ENCODE measurements at regions of chr6 and their contacts with region 1.

Region 1: DNA sequence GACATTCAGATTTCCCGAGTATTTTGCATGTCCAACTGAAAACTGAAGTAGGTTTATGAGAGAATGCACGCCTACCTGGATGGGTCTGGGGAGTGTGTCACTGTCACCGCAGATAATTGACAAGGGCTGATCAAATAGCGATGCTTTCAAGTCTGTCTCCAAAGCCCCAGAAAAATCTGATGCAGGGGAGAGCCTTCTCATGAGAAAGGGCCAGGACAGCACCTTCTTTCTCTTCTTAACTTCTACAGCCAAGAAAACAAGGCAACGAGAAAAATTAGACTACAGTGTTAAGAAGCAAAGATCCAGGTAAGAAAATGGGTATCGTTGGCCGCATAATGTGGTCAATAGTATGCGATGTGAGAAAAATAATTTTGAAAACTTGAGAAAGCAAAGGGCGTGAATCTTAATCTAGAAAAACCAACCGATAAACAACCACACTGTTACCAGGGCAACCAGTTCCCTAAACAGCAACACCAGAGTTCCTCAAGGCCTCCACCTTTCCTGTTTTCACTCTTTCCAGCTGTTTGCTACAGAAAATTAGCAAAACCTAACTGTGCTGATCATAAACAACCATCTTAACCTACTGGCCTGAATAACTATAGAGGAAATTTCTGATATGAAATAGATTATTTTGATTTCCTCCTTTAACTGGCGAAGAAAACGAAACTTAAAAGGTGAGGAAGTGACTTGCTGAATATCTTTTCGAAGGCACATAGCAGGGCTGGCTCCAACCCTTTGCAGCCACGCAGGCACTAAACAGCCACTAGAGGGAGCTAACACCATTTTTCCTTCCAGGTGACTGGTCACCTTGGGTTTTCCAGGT is 2.6 kb downstream of the TAGAP start:
- DNase-seq: peak; percentile 90 to 96 (median 93)
- H3K4me3 ChIP-seq: peak overlapping the region; percentile 77 to 79
- H3K4me3 Mint-ChIP-seq: peak overlapping the region; percentile 99 to 100 (median 100)
- H3K27ac ChIP-seq: peak overlapping the region; percentile 82
- H3K27ac Mint-ChIP-seq: peak overlapping the region; percentile 98 to 100 (median 99)
- H3K4me1 ChIP-seq: peaks cover 66% of the 10 kb centered on the region
- H3K4me1 Mint-ChIP-seq: peaks cover 45 to 88% (median 59%) of the 10 kb centered on the region in 4 donors
- H3K27me3 ChIP-seq: no peaks in the 10 kb centered on the region
- H3K27me3 Mint-ChIP-seq: peaks cover 0 to 2% of the 10 kb centered on the region in 2 donors

Region 2: DNA sequence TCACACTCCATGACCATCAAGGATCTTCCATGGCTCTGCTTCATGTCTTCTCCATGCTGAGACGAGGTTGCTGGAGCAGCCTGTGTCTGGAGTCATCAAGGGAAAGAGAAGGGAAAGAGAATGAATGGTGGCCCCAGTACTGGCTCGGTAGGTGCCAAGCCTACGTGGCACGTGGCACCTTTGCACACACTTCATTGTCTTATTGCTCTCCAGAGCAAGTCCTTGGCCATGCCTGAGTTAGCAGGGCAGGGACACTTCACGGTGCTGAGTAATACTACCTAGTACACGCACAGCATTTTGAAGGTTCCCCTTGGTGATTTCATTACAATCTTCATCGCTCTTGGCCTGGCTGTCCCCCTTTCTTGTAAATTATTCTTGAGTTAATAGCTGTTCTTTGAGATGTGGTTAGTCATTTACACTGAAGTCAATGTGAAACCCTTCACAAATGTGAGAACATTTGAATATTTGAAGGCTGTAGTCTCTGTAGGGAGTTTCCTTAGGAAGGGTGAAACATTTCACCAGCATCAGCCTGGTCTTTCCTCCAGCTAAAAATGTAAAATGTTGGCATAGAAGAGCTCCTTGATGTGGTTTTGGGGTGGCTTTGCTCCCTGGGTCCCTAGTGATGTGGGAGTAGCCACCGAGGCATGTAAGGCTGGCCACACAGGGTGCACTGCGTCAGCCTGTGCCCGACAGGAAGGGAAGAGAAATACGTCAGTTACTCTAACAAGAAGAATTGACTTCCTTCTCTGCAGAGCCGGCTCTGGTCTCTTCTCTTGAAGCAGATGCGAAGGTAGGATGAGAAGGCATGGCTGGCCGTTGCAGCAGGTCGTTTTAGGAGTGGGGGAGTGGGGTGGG is 392.7 kb before region 1 on chr6 and contains the start of gene SYTL3:
- CTCF ChIA-PET with region 1: no interaction called
- POLR2A ChIA-PET with region 1: interaction called, 4 read pairs
- intact Hi-C with region 1: loop called (anchors 2 kb)
- DNase-seq: peak; percentile 92 to 94 (median 92)
- H3K4me3 ChIP-seq: peak within 1 kb of the TSS in 1 of 2 donors; percentile 26
- H3K4me3 Mint-ChIP-seq: peak within 1 kb of the TSS; percentile 69 to 89 (median 84)
- H3K27ac ChIP-seq: peak within 1 kb of the TSS; percentile 66
- H3K27ac Mint-ChIP-seq: peak within 1 kb of the TSS; percentile 82 to 98 (median 94)
- H3K4me1 ChIP-seq: peaks cover 57% of the 10 kb centered on the region
- H3K4me1 Mint-ChIP-seq: peaks cover 49 to 77% (median 58%) of the 10 kb centered on the region in 4 donors
- H3K27me3 ChIP-seq: no peaks in the 10 kb centered on the region
- H3K27me3 Mint-ChIP-seq: no peaks in the 10 kb centered on the region
- total RNA-seq, gene SYTL3: 22.2 to 24.3 TPM

Region 3: GRCh38 chr6:158861686-158862381 is 180.4 kb before region 1 on chr6:
- CTCF ChIA-PET with region 1: no interaction called
- POLR2A ChIA-PET with region 1: no interaction called
- intact Hi-C with region 1: no loop called
- DNase-seq: no peak
- H3K4me3 ChIP-seq: no peak overlapping the region
- H3K4me3 Mint-ChIP-seq: no peak overlapping the region
- H3K27ac ChIP-seq: no peak overlapping the region
- H3K27ac Mint-ChIP-seq: no peak overlapping the region
- H3K4me1 ChIP-seq: no peaks in the 10 kb centered on the region
- H3K4me1 Mint-ChIP-seq: peaks cover 0 to 8% (median 2%) of the 10 kb centered on the region in 4 donors
- H3K27me3 ChIP-seq: no peaks in the 10 kb centered on the region
- H3K27me3 Mint-ChIP-seq: no peaks in the 10 kb centered on the region

Region 4: DNA sequence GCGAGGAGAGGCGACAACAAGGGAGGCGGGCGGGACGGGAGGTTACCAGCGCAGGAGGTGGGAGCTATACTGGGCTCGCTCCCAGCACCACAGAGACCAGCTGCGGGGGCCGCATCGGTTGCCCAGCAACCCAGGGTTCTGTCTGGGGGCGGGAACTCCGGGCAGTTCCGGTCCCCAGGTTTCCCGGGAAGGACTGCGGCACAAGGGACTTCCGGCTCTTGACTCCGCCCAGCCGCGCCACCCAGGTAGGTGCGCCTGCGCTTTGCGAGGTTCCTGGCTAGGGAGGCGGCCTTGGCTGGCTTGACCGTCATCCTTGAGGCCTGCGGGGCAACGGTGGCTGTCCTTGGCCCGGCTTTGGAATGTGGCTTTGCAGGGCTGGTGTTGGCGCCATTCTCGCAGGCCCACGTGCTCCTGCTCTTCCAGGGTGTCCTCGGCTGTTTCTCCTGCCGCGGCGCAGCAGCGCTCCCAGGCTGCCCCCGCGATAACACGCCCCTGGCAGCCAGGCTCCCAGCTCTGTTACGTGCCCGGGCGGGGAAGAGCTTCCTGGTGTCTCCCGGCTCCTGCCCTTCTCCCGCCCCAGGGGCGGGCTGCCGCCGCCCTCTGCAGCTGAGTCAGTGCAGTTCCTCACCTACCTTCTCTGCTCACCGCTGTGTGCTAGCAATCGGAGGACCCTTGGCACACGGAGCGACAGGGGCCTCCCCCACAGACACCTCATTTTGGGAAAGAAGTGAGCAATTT is 42.4 kb before region 1 on chr6 and contains the start of gene RSPH3:
- CTCF ChIA-PET with region 1: interaction called, 11 read pairs
- POLR2A ChIA-PET with region 1: interaction called, 34 read pairs
- intact Hi-C with region 1: loop called (anchors 2 kb)
- DNase-seq: peak; percentile 81 to 87 (median 83)
- H3K4me3 ChIP-seq: peak within 1 kb of the TSS; percentile 84
- H3K4me3 Mint-ChIP-seq: peak within 1 kb of the TSS; percentile 96 to 99 (median 98)
- H3K27ac ChIP-seq: peak within 1 kb of the TSS; percentile 73
- H3K27ac Mint-ChIP-seq: peak within 1 kb of the TSS; percentile 92 to 97 (median 95)
- H3K4me1 ChIP-seq: peaks cover 18% of the 10 kb centered on the region
- H3K4me1 Mint-ChIP-seq: peaks cover 10 to 33% (median 18%) of the 10 kb centered on the region in 4 donors
- H3K27me3 ChIP-seq: no peaks in the 10 kb centered on the region
- H3K27me3 Mint-ChIP-seq: no peaks in the 10 kb centered on the region
- total RNA-seq, gene RSPH3: 3.4 to 3.5 TPM

Region 5: DNA sequence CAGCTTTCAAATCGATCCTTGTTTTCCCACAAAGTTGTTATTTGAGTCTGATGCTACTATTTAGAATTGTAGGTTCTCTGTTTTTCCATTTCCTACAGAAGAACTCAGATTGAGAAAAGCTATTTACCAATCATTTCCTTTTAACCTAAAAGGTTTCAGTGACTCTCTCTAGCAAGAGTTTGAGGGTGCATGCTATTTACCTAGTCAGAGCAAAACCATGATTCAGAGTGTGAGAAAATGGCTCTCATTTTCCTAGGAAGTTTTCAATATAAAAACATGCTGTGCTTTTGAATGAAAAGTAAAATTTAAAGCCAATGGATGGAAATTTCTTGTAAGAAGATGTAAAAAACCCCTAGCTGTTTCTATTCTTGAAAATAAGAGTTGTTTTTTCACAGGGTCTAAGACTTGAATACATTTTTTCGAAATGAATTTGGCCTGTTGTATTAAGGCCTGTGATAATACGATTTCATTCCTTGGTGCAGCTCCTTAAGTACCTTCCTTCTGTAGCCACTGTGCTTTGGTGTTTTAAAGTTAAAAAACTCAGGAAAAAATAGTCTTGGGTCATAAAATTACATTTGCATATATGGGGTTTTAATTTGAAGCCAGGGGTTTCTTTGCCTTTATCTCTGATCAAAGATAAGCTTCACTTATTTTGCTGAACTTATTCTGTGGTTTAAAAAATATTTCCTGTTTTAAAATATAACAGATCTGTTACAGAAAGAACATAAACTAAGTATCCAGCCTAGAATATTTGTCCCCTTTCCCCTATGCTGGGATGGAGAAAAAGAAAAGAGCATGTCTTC is 24.3 kb before region 1 on chr6:
- CTCF ChIA-PET with region 1: interaction called, 220 read pairs
- POLR2A ChIA-PET with region 1: interaction called, 651 read pairs
- intact Hi-C with region 1: loop called (anchors 1 kb)
- DNase-seq: no peak
- H3K4me3 ChIP-seq: no peak overlapping the region
- H3K4me3 Mint-ChIP-seq: peak overlapping the region in 6 of 8 donors; percentile 25 to 76 (median 50)
- H3K27ac ChIP-seq: peak overlapping the region; percentile 48
- H3K27ac Mint-ChIP-seq: peak overlapping the region; percentile 52 to 90 (median 77)
- H3K4me1 ChIP-seq: peaks cover 64% of the 10 kb centered on the region
- H3K4me1 Mint-ChIP-seq: peaks cover 39 to 62% (median 51%) of the 10 kb centered on the region in 4 donors
- H3K27me3 ChIP-seq: no peaks in the 10 kb centered on the region
- H3K27me3 Mint-ChIP-seq: no peaks in the 10 kb centered on the region

Region 6: DNA sequence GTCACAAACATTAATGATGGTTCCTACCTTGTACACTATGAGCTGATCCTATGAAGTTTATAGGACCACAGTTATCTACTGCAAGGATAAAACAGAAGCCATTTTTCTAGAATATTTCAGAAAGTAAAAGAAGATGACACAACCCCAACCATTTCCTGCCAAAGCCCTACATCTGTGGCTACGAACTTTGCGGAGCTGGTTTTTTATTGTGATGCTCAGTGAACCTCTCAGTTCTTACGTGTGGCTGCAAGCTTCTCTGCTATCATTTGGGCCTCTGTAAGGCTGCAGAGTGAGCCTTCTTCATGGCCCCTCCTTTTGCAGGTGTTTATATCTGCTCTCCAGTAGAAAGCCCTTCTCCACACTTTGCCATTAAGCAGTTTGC is 20.3 kb after region 1 on chr6:
- CTCF ChIA-PET with region 1: interaction called, 74 read pairs
- POLR2A ChIA-PET with region 1: interaction called, 564 read pairs
- intact Hi-C with region 1: loop called (anchors 1 kb)
- DNase-seq: peak; percentile 80 to 87 (median 83)
- H3K4me3 ChIP-seq: no peak overlapping the region
- H3K4me3 Mint-ChIP-seq: peak overlapping the region; percentile 44 to 80 (median 72)
- H3K27ac ChIP-seq: peak overlapping the region; percentile 57
- H3K27ac Mint-ChIP-seq: peak overlapping the region; percentile 88 to 99 (median 98)
- H3K4me1 ChIP-seq: peaks cover 87% of the 10 kb centered on the region
- H3K4me1 Mint-ChIP-seq: peaks cover 66 to 91% (median 79%) of the 10 kb centered on the region in 4 donors
- H3K27me3 ChIP-seq: no peaks in the 10 kb centered on the region
- H3K27me3 Mint-ChIP-seq: no peaks in the 10 kb centered on the region

Region 7: GRCh38 chr6:159098636-159099106 is 56.5 kb after region 1 on chr6:
- CTCF ChIA-PET with region 1: interaction called, 333 read pairs
- POLR2A ChIA-PET with region 1: interaction called, 646 read pairs
- intact Hi-C with region 1: loop called (anchors 1 kb)
- DNase-seq: peak; percentile 82 to 91 (median 88)
- H3K4me3 ChIP-seq: peak overlapping the region in 1 of 2 donors; percentile 29
- H3K4me3 Mint-ChIP-seq: peak overlapping the region; percentile 71 to 89 (median 81)
- H3K27ac ChIP-seq: peak overlapping the region; percentile 76
- H3K27ac Mint-ChIP-seq: peak overlapping the region; percentile 93 to 99 (median 98)
- H3K4me1 ChIP-seq: peaks cover 64% of the 10 kb centered on the region
- H3K4me1 Mint-ChIP-seq: peaks cover 43 to 82% (median 60%) of the 10 kb centered on the region in 4 donors
- H3K27me3 ChIP-seq: no peaks in the 10 kb centered on the region
- H3K27me3 Mint-ChIP-seq: no peaks in the 10 kb centered on the region

Region 8: GRCh38 chr6:159118924-159119323 is 76.7 kb after region 1 on chr6:
- CTCF ChIA-PET with region 1: no interaction called
- POLR2A ChIA-PET with region 1: interaction called, 11 read pairs
- intact Hi-C with region 1: no loop called
- DNase-seq: no peak
- H3K4me3 ChIP-seq: no peak overlapping the region
- H3K4me3 Mint-ChIP-seq: no peak overlapping the region
- H3K27ac ChIP-seq: no peak overlapping the region
- H3K27ac Mint-ChIP-seq: no peak overlapping the region
- H3K4me1 ChIP-seq: peaks cover 8% of the 10 kb centered on the region
- H3K4me1 Mint-ChIP-seq: peaks cover 5 to 13% (median 7%) of the 10 kb centered on the region in 4 donors
- H3K27me3 ChIP-seq: no peaks in the 10 kb centered on the region
- H3K27me3 Mint-ChIP-seq: no peaks in the 10 kb centered on the region

Measured in CD4-positive, alpha-beta memory T cell (primary cell).